ENCODE measurements at regions of chr14 and their contacts with region 1.

Region 1: DNA sequence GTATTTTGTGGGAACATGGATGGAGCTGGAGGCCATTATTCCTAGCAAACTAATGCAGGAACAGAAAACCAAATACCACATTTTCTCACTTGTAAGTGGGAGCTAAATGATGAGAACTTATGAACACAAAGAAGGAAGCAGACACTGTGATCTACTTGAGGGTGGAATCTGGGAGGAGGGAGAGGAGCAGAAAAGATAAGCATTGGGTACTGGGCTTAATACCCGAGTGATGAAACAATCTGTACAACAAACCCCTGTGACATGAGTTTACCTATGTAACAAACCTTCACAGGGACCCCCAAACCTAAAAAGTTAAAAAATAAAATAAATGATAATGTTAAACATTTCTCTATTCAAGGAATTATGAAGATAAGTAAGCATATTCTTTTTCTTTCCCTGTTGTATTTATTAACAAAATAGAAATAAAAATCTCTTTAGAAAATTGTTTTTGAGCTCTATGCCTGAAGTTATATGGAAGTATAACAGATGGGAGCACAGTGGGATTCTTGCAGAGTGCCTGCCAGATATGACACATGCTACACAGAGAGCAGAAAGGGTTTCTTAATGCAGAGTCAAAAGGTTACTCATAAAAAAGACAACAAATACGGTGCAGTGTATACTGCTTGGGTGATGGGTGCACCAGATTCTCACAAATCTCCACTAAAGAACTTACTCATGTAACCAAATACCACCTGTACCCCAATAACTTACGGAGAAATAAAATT is 52.0 kb upstream of the SYNE2 start:
- DNase-seq: no peak
- H3K4me3 ChIP-seq: no peak overlapping the region
- H3K27ac ChIP-seq: no peak overlapping the region
- H3K4me1 ChIP-seq: peaks cover 5% of the 10 kb centered on the region
- H3K27me3 ChIP-seq: no peaks in the 10 kb centered on the region
- CTCF ChIP-seq: no peak
- POLR2A ChIP-seq: no peak

Region 2: DNA sequence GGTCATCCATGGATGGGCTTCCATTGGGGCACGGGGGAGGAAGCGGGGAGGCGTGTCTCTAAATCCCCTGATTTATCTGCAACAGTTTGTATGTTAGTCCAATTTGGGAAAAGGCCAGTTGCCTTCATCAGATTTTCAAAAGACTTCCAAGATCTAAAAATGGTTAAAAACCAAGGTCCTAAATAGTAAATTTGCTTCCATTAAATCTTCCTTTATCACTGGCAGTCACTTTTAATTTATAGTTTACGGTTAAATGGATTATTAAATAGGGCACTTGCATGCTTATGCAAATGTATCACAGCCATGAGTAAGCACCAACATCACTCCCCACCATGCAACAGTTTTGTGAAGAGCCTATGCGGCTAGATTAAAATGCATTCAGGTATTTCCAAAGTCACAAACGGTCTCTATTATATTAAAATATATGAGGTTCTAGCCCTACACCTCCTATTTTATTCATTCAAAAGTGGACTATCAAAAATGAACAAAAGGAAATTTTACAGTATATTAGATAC is 373.9 kb before region 1 on chr14:
- intact Hi-C with region 1: no loop called
- DNase-seq: no peak
- H3K4me3 ChIP-seq: no peak overlapping the region
- H3K27ac ChIP-seq: no peak overlapping the region
- H3K4me1 ChIP-seq: peaks cover 3% of the 10 kb centered on the region
- H3K27me3 ChIP-seq: no peaks in the 10 kb centered on the region
- CTCF ChIP-seq: no peak
- POLR2A ChIP-seq: no peak

Region 3: DNA sequence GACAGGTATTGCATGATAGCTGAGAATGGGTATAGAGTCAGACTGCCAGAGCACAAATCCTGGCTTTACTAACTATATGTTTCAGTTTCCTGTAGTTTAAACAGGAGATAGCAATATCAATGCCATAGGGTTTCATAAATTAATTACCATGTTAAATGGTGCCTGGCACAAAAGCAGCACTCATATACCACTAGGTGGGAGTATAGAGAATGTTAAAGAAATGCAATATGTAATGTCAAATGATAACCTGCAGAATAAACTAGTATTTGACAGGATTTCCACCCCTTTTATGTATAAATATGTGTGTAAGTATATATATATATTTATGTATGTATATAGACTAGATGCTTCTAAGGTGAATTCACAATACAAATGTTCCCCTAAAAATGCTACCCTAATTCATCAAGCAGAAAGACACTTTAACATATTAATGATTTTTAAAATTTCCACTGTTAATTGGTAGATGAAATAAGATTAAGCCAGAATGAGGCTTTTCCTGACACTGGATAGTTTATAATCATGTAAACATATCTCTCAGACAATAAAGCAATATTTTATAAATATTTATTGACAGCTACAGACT is 167.8 kb before region 1 on chr14:
- intact Hi-C with region 1: no loop called
- DNase-seq: no peak
- H3K4me3 ChIP-seq: no peak overlapping the region
- H3K27ac ChIP-seq: no peak overlapping the region
- H3K4me1 ChIP-seq: no peaks in the 10 kb centered on the region
- H3K27me3 ChIP-seq: no peaks in the 10 kb centered on the region
- CTCF ChIP-seq: no peak
- POLR2A ChIP-seq: no peak

Region 4: GRCh38 chr14:64303471-64303917 is 502.7 kb after region 1 on chr14:
- intact Hi-C with region 1: loop called (anchors 5 kb)
- DNase-seq: no peak
- H3K4me3 ChIP-seq: no peak overlapping the region
- H3K27ac ChIP-seq: no peak overlapping the region
- H3K4me1 ChIP-seq: no peaks in the 10 kb centered on the region
- H3K27me3 ChIP-seq: no peaks in the 10 kb centered on the region
- CTCF ChIP-seq: peak; percentile 64 to 82 (median 75)
- POLR2A ChIP-seq: no peak